Sigmoid colon (tissue), 7 donors: ENCODE measurements at regions of chr12 and their contacts with region 1.

Region 1: DNA sequence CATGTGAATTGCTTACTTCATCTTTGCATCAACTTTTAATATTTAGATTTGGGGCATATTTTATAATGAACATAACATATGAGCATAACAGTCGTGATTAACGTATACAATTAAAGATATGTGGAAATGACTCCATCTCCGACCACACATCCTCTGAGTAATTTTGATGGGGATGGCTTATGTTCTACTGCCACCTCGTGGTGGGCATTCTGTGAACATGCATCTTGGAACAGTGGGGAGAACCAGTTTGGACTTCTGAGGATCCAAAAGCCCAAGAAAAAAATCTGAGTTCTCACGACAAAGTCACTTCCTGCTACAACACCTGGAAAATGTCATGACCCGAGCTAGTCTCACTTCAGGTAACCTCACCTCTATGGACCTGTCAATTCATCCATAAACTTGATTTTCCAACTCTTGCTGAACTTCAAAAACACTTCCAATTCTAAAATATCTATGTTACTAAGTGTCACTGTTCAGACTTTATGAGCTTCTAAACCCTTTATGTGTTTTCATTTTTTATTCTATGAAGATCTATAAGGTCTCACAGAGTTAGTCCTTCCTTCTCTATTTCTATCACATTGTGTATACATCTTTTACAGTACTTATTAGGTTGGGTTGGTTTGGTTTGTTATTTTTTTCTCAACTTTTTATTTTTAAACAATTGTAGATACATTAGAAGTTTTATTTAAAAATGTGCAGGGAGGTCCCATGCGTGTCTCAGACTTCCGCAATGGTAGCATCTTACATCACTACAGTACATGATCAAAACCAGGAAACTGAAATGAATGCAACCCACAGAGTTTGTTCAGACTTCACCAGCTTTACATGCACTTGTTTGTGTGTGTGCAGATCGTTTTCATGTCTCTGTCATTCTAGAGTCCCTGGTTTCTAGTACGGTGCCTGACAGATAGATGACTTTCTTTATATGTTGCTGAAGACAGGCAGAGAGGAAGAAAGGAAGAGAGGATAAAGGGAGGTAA is 38.2 kb upstream of the STAB2 start:
- DNase-seq: peak; percentile 78
- H3K4me3 ChIP-seq: no peak overlapping the region
- H3K27ac ChIP-seq: no peak overlapping the region
- H3K4me1 ChIP-seq: no peaks in the 10 kb centered on the region
- H3K27me3 ChIP-seq: no peaks in the 10 kb centered on the region
- CTCF ChIP-seq: peak; percentile 61 to 79 (median 74)
- EP300 ChIP-seq: no peak
- POLR2A ChIP-seq: no peak

Region 2: GRCh38 chr12:102883204-102883799 is 665.6 kb before region 1 on chr12:
- intact Hi-C with region 1: loop called (anchors 2 kb)
- DNase-seq: no peak
- H3K4me3 ChIP-seq: no peak overlapping the region
- H3K27ac ChIP-seq: no peak overlapping the region
- H3K4me1 ChIP-seq: peaks cover 0 to 4% (median 0%) of the 10 kb centered on the region in 4 donors
- H3K27me3 ChIP-seq: peaks cover 0 to 21% (median 0%) of the 10 kb centered on the region in 3 donors
- CTCF ChIP-seq: peak in 3 of 4 experiments; percentile 29 to 66 (median 55)
- EP300 ChIP-seq: no peak
- POLR2A ChIP-seq: no peak

Region 3: GRCh38 chr12:102948941-102949352 is 600.0 kb before region 1 on chr12:
- intact Hi-C with region 1: loop called (anchors 1 kb)
- DNase-seq: no peak
- H3K4me3 ChIP-seq: no peak overlapping the region
- H3K27ac ChIP-seq: no peak overlapping the region
- H3K4me1 ChIP-seq: no peaks in the 10 kb centered on the region
- H3K27me3 ChIP-seq: peaks cover 3 to 68% (median 27%) of the 10 kb centered on the region in 3 donors
- CTCF ChIP-seq: peak; percentile 31 to 78 (median 68)
- EP300 ChIP-seq: no peak
- POLR2A ChIP-seq: no peak

Region 4: DNA sequence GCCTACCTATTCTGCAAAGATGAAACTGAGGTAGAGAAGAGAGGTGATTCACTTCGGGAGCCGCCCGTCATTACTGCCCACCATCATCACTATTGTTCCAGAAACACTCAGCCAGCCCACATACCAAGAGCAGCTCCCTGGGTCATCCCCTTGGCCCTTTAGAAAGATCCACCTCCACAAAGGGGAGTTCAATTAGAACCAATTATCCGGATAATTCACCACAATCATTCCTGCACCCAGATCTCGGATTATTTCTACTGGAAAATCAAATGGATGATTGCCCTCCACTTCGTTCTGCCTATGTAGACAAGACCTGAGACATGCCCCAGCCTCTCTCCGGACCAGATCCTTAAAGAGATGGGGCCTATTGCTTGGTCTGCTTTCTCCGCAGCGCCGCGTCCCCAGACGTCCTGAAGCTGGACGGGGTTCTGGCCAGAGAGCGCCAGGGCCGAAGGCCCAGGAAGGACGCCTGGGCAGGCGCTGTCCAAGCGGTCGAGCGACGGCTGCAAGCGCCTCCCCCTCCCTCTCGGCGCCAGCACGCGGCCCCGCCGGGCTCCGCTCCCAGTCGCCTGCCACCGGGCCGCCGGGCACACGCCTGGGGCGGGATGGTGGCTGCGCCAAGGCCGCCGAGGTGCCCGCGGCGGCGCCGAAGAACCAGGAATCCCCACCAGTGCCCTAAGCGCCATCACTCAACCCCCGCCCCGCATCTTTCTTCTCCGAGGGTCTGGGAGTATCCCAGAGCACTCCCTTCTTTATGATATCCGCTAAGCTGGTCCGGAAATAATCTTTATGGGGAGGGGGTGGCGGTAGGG is 592.8 kb before region 1 on chr12:
- intact Hi-C with region 1: loop called (anchors 2 kb)
- DNase-seq: no peak
- H3K4me3 ChIP-seq: peak overlapping the region in 1 of 4 donors; percentile 1
- H3K27ac ChIP-seq: no peak overlapping the region
- H3K4me1 ChIP-seq: peaks cover 0 to 32% (median 28%) of the 10 kb centered on the region in 4 donors
- H3K27me3 ChIP-seq: peaks cover 24 to 99% (median 72%) of the 10 kb centered on the region in 3 donors
- CTCF ChIP-seq: no peak
- EP300 ChIP-seq: no peak
- POLR2A ChIP-seq: no peak

Region 5: DNA sequence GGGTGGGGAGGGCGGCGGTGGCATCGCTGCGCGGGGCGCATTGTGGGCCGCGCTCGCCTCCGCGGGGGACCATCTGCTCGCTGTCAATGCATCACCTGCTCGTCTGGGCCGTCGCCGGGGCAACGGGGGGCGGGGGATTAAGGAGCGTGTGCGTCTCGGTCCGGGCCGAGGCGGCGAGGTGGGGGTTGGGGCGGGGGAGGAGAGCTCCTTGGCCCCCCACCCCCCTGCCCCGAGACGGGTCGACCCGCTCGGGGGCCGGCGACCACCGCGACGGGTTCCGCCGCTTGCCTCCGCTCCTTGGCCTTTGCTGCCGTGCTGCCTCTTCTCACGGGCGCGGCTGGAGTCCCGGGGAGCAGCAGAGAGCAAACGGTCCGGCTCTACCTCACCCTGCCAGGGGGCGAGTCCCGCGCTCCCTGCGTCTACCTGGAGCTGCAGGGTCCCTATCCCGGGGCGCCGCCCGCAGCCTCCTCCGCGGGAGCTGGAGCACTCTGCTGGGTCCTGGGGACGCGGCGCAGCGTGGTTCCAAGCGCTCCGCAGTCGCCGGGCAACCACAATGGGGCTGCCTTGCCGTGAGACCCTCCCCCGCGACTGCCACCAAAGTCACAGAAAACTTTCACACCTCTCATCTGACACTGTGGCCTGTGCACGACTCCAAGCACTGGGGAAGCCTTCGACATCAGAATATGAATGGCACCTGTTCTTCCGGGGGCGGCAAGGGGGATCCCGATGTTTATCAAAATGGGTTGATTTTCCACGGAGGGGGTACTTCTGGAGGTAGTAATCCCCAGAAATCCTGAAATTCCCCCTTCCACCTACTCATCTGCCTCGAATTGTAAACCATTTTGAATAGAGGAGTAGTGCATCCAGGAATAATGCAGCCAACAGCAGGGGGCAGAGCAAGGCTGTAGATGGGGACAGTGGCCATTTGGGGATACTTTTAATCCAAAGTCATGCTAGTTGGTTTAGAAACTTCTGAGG is 53.1 kb before region 1 on chr12 and contains the start of gene C12orf42:
- intact Hi-C with region 1: loop called (anchors 5 kb)
- DNase-seq: no peak
- H3K4me3 ChIP-seq: peak within 1 kb of the TSS; percentile 14 to 55 (median 44)
- H3K27ac ChIP-seq: no peak within 1 kb of the TSS
- H3K4me1 ChIP-seq: peaks cover 0 to 15% (median 15%) of the 10 kb centered on the region in 4 donors
- H3K27me3 ChIP-seq: peaks cover 7 to 38% (median 20%) of the 10 kb centered on the region in 3 donors
- CTCF ChIP-seq: peak in 1 of 4 experiments; percentile 39
- EP300 ChIP-seq: no peak
- POLR2A ChIP-seq: no peak
- total RNA-seq, gene C12orf42: not detected

Region 6: GRCh38 chr12:103799870-103800771 is 251.2 kb after region 1 on chr12:
- intact Hi-C with region 1: no loop called
- DNase-seq: peak; percentile 83
- H3K4me3 ChIP-seq: no peak overlapping the region
- H3K27ac ChIP-seq: peak overlapping the region; percentile 72 to 99 (median 78)
- H3K4me1 ChIP-seq: peaks cover 0 to 96% (median 86%) of the 10 kb centered on the region in 4 donors
- H3K27me3 ChIP-seq: no peaks in the 10 kb centered on the region
- CTCF ChIP-seq: no peak
- EP300 ChIP-seq: peak in 2 of 4 donors; percentile 33
- POLR2A ChIP-seq: no peak

Region 7: DNA sequence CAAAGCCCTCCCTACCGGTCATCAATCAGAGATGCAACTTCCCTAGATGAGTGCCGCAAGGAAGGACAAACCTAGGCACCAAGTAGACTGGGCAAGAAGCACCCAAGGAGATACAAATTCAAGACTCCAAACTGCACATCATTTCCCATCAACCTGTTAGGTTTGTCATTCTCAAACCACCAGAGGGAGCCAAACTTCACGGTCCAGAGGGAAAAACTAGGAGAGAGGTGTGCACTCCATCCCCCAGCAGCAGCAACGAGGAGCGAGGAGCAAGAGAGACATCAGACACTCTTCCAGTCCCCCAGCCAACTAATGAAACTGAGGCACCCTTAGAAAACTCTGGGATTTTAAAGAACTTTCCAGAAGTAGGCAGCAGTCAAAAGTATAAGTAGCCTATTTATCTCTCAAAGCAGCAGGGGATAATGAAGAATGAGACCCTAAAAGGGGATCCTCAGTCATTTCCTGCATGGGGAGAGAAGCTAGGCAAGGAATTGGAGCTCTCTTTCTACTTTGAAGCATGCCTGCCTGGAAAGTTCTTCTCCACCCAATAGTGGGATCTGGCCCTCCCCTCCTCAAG is 329.1 kb after region 1 on chr12:
- intact Hi-C with region 1: no loop called
- DNase-seq: peak; percentile 78
- H3K4me3 ChIP-seq: no peak overlapping the region
- H3K27ac ChIP-seq: no peak overlapping the region
- H3K4me1 ChIP-seq: peaks cover 0 to 5% (median 0%) of the 10 kb centered on the region in 4 donors
- H3K27me3 ChIP-seq: no peaks in the 10 kb centered on the region
- CTCF ChIP-seq: peak; percentile 51 to 64 (median 60)
- EP300 ChIP-seq: no peak
- POLR2A ChIP-seq: no peak